ENCODE measurements at regions of chr2 and their contacts with region 1.

Region 1: GRCh38 chr2:98269274-98269673 is 77.0 kb upstream of the CNGA3 start:
- DNase-seq: peak; percentile 27
- H3K4me3 ChIP-seq: no peak overlapping the region
- H3K27ac ChIP-seq: no peak overlapping the region
- H3K4me1 ChIP-seq: no peaks in the 10 kb centered on the region
- H3K27me3 ChIP-seq: peaks cover 2 to 4% of the 10 kb centered on the region in 2 experiments
- CTCF ChIP-seq: peak; percentile 44 to 60
- POLR2A ChIP-seq: no peak

Region 2: GRCh38 chr2:97697252-97698235 is 571.7 kb before region 1 on chr2:
- CTCF ChIA-PET with region 1: interaction called, 29 read pairs
- POLR2A ChIA-PET with region 1: no interaction called
- dilution Hi-C with region 1: no loop called
- intact Hi-C with region 1: no loop called
- DNase-seq: peak; percentile 85
- H3K4me3 ChIP-seq: no peak overlapping the region
- H3K27ac ChIP-seq: no peak overlapping the region
- H3K4me1 ChIP-seq: no peaks in the 10 kb centered on the region
- H3K27me3 ChIP-seq: peaks cover 2 to 3% of the 10 kb centered on the region in 2 experiments
- CTCF ChIP-seq: peak; percentile 83 to 86
- POLR2A ChIP-seq: no peak

Region 3: GRCh38 chr2:97713296-97714083 is 555.8 kb before region 1 on chr2 and contains the start of gene ZAP70:
- CTCF ChIA-PET with region 1: interaction called, 56 read pairs
- POLR2A ChIA-PET with region 1: no interaction called
- dilution Hi-C with region 1: no loop called
- intact Hi-C with region 1: loop called (anchors 1 kb)
- DNase-seq: no peak
- H3K4me3 ChIP-seq: no peak within 1 kb of the TSS
- H3K27ac ChIP-seq: no peak within 1 kb of the TSS
- H3K4me1 ChIP-seq: no peaks in the 10 kb centered on the region
- H3K27me3 ChIP-seq: no peaks in the 10 kb centered on the region
- CTCF ChIP-seq: no peak
- POLR2A ChIP-seq: no peak
- total RNA-seq, gene ZAP70: not detected in 2 replicates

Region 4: DNA sequence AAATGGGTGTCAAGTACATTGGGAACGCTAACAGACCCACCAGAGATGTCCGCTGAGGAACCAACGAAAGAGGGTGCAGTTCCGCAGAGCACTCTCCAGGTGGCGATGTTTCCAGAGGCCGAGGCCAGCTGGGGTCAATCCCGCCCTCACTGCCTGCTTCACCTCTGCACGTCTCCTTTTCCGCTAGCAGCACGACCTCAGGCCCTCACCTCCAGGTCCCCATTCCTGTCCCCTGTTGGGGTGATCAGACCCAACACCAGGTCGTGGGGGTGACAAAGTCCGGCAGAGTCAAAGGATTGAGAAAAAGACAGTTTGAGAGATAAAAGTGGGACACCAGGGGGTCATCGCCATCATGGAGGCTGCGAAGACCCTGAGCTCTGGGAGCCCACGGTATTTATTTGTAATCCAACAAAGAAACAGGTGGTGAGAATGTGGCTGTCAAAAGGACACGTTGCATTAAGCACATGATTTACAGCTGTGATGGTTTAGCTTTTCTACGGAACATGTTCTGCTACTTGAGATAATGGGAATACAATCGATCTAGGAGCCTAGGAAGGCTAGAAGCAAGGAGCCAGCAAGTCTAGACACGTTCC is 528.6 kb before region 1 on chr2:
- CTCF ChIA-PET with region 1: interaction called, 20 read pairs
- POLR2A ChIA-PET with region 1: no interaction called
- dilution Hi-C with region 1: no loop called
- intact Hi-C with region 1: no loop called
- DNase-seq: peak; percentile 23
- H3K4me3 ChIP-seq: no peak overlapping the region
- H3K27ac ChIP-seq: no peak overlapping the region
- H3K4me1 ChIP-seq: peaks cover 7% of the 10 kb centered on the region
- H3K27me3 ChIP-seq: no peaks in the 10 kb centered on the region
- CTCF ChIP-seq: peak; percentile 69 to 82
- POLR2A ChIP-seq: no peak

Region 5: GRCh38 chr2:97774425-97774824 is 494.8 kb before region 1 on chr2:
- CTCF ChIA-PET with region 1: interaction called, 37 read pairs
- POLR2A ChIA-PET with region 1: no interaction called
- dilution Hi-C with region 1: no loop called
- intact Hi-C with region 1: loop called (anchors 1 kb)
- DNase-seq: peak; percentile 12
- H3K4me3 ChIP-seq: no peak overlapping the region
- H3K27ac ChIP-seq: no peak overlapping the region
- H3K4me1 ChIP-seq: no peaks in the 10 kb centered on the region
- H3K27me3 ChIP-seq: no peaks in the 10 kb centered on the region
- CTCF ChIP-seq: peak; percentile 47 to 69
- POLR2A ChIP-seq: no peak

Region 6: GRCh38 chr2:97806738-97807618 is 462.3 kb before region 1 on chr2:
- CTCF ChIA-PET with region 1: interaction called, 56 read pairs
- POLR2A ChIA-PET with region 1: no interaction called
- dilution Hi-C with region 1: no loop called
- intact Hi-C with region 1: loop called (anchors 1 kb)
- DNase-seq: peak; percentile 67
- H3K4me3 ChIP-seq: no peak overlapping the region
- H3K27ac ChIP-seq: no peak overlapping the region
- H3K4me1 ChIP-seq: no peaks in the 10 kb centered on the region
- H3K27me3 ChIP-seq: no peaks in the 10 kb centered on the region
- CTCF ChIP-seq: peak; percentile 86 to 95
- POLR2A ChIP-seq: no peak

Region 7: DNA sequence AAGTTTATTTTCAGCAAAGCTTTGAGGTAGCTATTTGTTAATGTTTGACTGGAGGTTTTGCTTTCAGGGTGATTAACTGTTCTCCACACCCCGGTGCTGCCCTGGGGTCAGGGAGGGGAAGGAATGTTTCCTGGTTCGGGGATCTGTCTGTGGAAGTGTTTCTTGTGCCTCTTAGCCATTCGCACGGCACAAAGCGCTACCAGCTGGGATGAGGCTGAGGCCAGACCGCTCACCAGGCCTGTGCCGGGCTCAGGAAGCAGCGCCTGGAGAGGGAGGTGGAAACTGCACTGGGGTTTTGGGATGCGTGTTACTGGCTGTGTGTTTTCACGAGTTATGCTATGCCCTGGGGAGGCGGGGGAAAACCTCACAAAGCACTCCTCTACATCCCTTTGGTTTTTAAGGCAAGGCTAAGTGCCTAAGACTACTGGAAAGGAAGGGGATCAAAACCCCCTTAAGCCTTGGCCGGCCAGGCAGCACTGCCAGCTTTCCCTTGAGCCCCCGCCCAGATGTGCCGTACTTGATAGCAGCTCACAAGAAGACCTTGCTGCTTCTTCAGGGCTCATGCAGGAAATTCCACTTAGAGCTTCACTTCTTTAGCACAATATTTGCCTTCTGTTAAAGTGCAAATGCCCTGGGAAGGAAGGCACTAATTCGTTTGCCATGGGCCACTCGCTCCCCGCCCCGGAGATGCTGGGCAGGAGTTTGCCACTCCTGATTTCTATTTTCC is 11.3 kb after region 1 on chr2:
- CTCF ChIA-PET with region 1: interaction called, 24 read pairs
- POLR2A ChIA-PET with region 1: no interaction called
- dilution Hi-C with region 1: no loop called
- intact Hi-C with region 1: no loop called
- DNase-seq: peak; percentile 37
- H3K4me3 ChIP-seq: no peak overlapping the region
- H3K27ac ChIP-seq: no peak overlapping the region
- H3K4me1 ChIP-seq: peaks cover 3% of the 10 kb centered on the region
- H3K27me3 ChIP-seq: peaks cover 17 to 26% of the 10 kb centered on the region in 2 experiments
- CTCF ChIP-seq: no peak
- POLR2A ChIP-seq: no peak

Region 8: GRCh38 chr2:98334439-98335078 is 65.3 kb after region 1 on chr2:
- CTCF ChIA-PET with region 1: no interaction called
- POLR2A ChIA-PET with region 1: no interaction called
- dilution Hi-C with region 1: no loop called
- intact Hi-C with region 1: no loop called
- DNase-seq: peak; percentile 22
- H3K4me3 ChIP-seq: no peak overlapping the region
- H3K27ac ChIP-seq: no peak overlapping the region
- H3K4me1 ChIP-seq: no peaks in the 10 kb centered on the region
- H3K27me3 ChIP-seq: no peaks in the 10 kb centered on the region
- CTCF ChIP-seq: no peak
- POLR2A ChIP-seq: no peak